HepG2 (cell line): ENCODE measurements at regions of chr22 and their contacts with region 1.

Region 1: DNA sequence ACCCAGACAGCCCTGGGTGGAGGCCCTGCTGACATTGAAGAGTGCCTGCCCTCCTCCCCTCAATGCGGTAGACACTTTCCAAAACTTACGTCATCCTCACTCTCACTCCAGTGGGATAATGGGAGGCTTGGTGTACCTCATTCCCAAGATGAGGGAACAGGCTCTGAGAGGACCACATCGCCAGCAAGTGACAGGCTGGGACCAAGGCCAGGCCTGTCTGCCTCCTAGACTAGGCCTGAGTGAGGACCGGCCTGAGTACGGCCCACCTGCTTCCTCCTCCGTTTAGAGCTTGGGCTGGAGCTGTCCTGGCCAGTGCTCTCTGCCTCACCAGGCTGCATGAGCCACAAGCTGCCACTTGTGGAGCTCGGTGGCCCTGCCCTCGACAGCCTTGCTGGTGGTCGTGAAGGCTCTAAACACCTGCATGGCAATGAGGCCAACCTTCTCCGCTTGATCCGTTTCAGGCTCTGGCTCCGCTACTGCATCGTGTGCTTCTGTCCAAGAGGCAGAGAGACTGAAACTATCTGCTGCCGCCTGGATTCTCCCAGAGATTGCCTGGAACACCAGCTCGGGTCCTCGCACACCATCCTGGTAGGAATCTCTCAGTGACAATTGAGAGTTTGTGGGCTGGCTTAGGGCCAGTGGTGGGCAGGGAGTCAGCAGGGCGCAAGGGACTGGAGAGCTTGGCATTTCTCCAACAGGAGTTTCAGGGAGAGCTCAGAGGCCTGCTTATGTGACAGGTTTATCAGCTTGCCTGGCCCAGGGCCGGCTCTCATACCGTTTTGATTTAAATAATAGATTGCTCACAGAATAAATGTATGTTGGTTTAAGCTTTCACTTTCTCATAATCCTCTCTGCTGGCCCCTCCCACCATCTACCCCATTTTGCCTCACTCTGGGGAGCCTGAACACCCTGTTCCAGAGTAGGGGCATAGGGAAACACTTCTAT is 9.4 kb downstream of the LRRC75B start:
- DNase-seq: peak; percentile 76
- ATAC-seq: peak; percentile 65
- H3K4me3 ChIP-seq: peak overlapping the region; percentile 45 to 69 (median 47); a peak in 5 of 6 replicates
- H3K27ac ChIP-seq: peak overlapping the region; percentile 69
- H3K4me1 ChIP-seq: peaks cover 86% of the 10 kb centered on the region
- H3K27me3 ChIP-seq: no peaks in the 10 kb centered on the region
- CTCF ChIP-seq: 0 out of 2 replicates have a peak, but pooled peaks have one; percentile 2
- EP300 ChIP-seq: no peak
- POLR2A ChIP-seq: peak in 1 of 2 experiments; percentile 44; a peak in 1 of 4 replicates
- RAD21 ChIP-seq: no peak

Region 2: GRCh38 chr22:24564376-24565058 is 19.0 kb before region 1 on chr22:
- CTCF ChIA-PET with region 1: no interaction called
- POLR2A ChIA-PET with region 1: interaction called, 35 read pairs
- in situ Hi-C with region 1: no loop called
- intact Hi-C with region 1: loop called (anchors 2 kb)
- DNase-seq: peak; percentile 70
- ATAC-seq: peak; percentile 92
- H3K4me3 ChIP-seq: peak overlapping the region in 1 of 3 experiments; percentile 32; a peak in 1 of 6 replicates
- H3K27ac ChIP-seq: peak overlapping the region; percentile 74
- H3K4me1 ChIP-seq: peaks cover 85% of the 10 kb centered on the region
- H3K27me3 ChIP-seq: no peaks in the 10 kb centered on the region
- CTCF ChIP-seq: no peak
- EP300 ChIP-seq: peak in 1 of 2 experiments; percentile 29; a peak in 1 of 4 replicates
- POLR2A ChIP-seq: no peak
- RAD21 ChIP-seq: no peak

Region 3: GRCh38 chr22:24601217-24602104 is 18.0 kb after region 1 on chr22:
- CTCF ChIA-PET with region 1: no interaction called
- POLR2A ChIA-PET with region 1: interaction called, 27 read pairs
- in situ Hi-C with region 1: no loop called
- intact Hi-C with region 1: no loop called
- DNase-seq: peak; percentile 66
- ATAC-seq: peak; percentile 61
- H3K4me3 ChIP-seq: peak overlapping the region in 2 of 3 experiments; percentile 68 to 80; a peak in 4 of 6 replicates
- H3K27ac ChIP-seq: peak overlapping the region; percentile 82
- H3K4me1 ChIP-seq: peaks cover 40% of the 10 kb centered on the region
- H3K27me3 ChIP-seq: no peaks in the 10 kb centered on the region
- CTCF ChIP-seq: no peak
- EP300 ChIP-seq: no peak
- POLR2A ChIP-seq: peak in 1 of 2 experiments; percentile 71; a peak in 3 of 4 replicates
- RAD21 ChIP-seq: no peak